ENCODE measurements at regions of chr1 and their contacts with region 1.

Region 1: DNA sequence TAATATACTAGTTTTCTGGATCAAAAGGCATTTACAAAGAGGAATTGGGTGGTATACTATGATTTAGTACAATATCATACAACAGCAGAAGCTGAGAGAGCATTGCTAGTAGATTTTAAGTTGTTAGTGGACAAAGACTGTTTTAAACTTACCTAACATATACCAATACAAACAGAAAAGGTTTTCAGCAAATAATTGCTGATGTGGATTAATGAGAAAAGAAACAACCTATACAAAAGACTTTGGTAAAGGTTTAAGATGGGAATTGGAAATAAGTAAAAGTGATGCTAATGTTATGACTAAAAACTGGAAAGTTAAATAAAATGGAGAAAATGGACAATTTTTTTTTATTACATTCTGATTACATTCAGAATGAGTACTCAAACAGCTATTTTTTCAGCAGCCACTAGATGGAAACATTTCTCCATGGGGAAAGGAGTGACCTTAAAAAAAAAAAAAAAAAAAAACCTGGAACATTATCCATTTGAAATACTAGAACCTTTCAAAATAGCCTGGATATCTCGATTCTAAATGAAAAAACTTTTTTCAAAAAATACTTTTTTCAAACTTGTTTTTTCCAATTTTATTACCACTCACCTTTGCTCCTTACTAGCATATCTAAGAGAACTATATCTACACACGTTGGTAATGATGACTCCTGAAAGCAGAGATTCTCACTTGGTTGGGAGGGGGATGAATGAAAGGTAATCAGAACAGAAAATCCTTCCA is 55.4 kb downstream of the EPRS1 start:
- DNase-seq: no peak
- H3K4me3 ChIP-seq: no peak overlapping the region
- H3K27ac ChIP-seq: no peak overlapping the region
- H3K4me1 ChIP-seq: peaks cover 3 to 4% of the 10 kb centered on the region in 2 donors
- H3K27me3 ChIP-seq: no peaks in the 10 kb centered on the region
- CTCF ChIP-seq: peak in 2 of 3 experiments; percentile 51 to 72

Region 2: GRCh38 chr1:219582296-219582695 is 408.6 kb before region 1 on chr1:
- intact Hi-C with region 1: no loop called
- DNase-seq: no peak
- H3K4me3 ChIP-seq: no peak overlapping the region
- H3K27ac ChIP-seq: no peak overlapping the region
- H3K4me1 ChIP-seq: no peaks in the 10 kb centered on the region
- H3K27me3 ChIP-seq: no peaks in the 10 kb centered on the region
- CTCF ChIP-seq: no peak

Region 3: GRCh38 chr1:220012259-220012658 is 21.3 kb after region 1 on chr1:
- intact Hi-C with region 1: no loop called
- DNase-seq: no peak
- H3K4me3 ChIP-seq: no peak overlapping the region
- H3K27ac ChIP-seq: peak overlapping the region; percentile 23 to 78
- H3K4me1 ChIP-seq: peaks cover 3 to 10% of the 10 kb centered on the region in 2 donors
- H3K27me3 ChIP-seq: no peaks in the 10 kb centered on the region
- CTCF ChIP-seq: peak in 1 of 3 experiments; percentile 18

Region 4: GRCh38 chr1:220089650-220090556 is 99.0 kb after region 1 on chr1 and contains the start of gene BPNT1:
- intact Hi-C with region 1: loop called (anchors 2 kb)
- DNase-seq: peak; percentile 74 to 97
- H3K4me3 ChIP-seq: peak within 1 kb of the TSS; percentile 56 to 71
- H3K27ac ChIP-seq: peak within 1 kb of the TSS in 1 of 2 donors; percentile 59
- H3K4me1 ChIP-seq: peaks cover 0 to 2% of the 10 kb centered on the region in 2 donors
- H3K27me3 ChIP-seq: no peaks in the 10 kb centered on the region
- CTCF ChIP-seq: no peak
- total RNA-seq, gene BPNT1: 5.4 TPM

Region 5: DNA sequence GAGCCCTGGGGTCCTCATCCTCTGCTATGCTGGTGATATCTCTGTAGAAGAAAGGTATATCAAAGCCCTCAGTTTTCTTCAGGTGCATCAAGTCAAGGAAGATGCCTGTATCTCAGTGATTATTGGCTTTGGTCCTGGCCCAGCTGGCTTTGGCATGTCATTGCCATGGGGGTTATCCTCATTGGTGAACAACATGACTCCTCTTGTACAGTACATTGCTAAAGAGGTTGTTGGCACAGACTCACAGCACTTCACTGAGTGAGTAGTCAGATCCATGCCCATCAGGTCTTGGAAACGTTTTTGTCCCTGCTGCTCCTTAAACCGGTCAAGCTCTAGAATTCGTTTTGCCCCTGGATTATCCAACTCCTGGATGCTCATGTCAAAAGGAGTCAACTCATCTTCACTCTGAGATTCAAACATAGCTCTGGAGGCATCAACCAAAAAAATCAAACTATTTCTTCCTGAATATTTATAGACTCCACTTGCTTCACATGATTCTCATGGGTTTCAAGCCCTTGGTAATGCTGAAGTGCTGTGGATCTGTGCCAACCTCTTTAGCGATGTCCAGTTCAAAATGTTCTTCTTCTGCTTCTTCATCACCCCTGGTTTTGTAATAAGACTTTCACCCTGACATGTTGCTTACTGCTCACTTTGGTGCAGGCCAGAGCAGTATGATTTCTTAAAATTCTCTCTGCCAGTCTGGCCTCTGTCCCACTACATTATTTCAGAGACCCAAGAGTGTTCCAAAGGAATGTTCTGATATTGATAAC is 324.3 kb after region 1 on chr1:
- intact Hi-C with region 1: no loop called
- DNase-seq: no peak
- H3K4me3 ChIP-seq: no peak overlapping the region
- H3K27ac ChIP-seq: no peak overlapping the region
- H3K4me1 ChIP-seq: no peaks in the 10 kb centered on the region
- H3K27me3 ChIP-seq: no peaks in the 10 kb centered on the region
- CTCF ChIP-seq: no peak